ENCODE measurements at regions of chr2 and their contacts with region 1.

Region 1: GRCh38 chr2:73071360-73072133 is at the start of gene SFXN5:
- DNase-seq: peak; percentile 85 to 98 (median 90)
- ATAC-seq: peak; percentile 93
- H3K4me3 ChIP-seq: peak within 1 kb of the TSS; percentile 98
- H3K4me3 Mint-ChIP-seq: peak within 1 kb of the TSS; percentile 82 to 98 (median 93)
- H3K27ac ChIP-seq: peak within 1 kb of the TSS; percentile 81
- H3K27ac Mint-ChIP-seq: peak within 1 kb of the TSS; percentile 86 to 96 (median 94)
- H3K4me1 ChIP-seq: peaks cover 5 to 7% of the 10 kb centered on the region in 2 donors
- H3K4me1 Mint-ChIP-seq: peaks cover 14 to 39% (median 26%) of the 10 kb centered on the region in 7 donors
- H3K27me3 ChIP-seq: no peaks in the 10 kb centered on the region
- H3K27me3 Mint-ChIP-seq: peaks cover 0 to 18% (median 0%) of the 10 kb centered on the region in 5 donors
- total RNA-seq, gene SFXN5: 8.8 to 17.4 (median 10.9) TPM

Region 2: GRCh38 chr2:72825241-72826155 is 246.0 kb before region 1 on chr2 and contains the start of gene EXOC6B:
- CTCF ChIA-PET with region 1: no interaction called
- POLR2A ChIA-PET with region 1: no interaction called
- intact Hi-C with region 1: loop called (anchors 2 to 5 kb)
- DNase-seq: peak; percentile 78 to 87 (median 84)
- ATAC-seq: peak; percentile 96
- H3K4me3 ChIP-seq: peak within 1 kb of the TSS; percentile 70
- H3K4me3 Mint-ChIP-seq: peak within 1 kb of the TSS; percentile 88 to 99 (median 98)
- H3K27ac ChIP-seq: peak within 1 kb of the TSS; percentile 69
- H3K27ac Mint-ChIP-seq: peak within 1 kb of the TSS; percentile 70 to 96 (median 92)
- H3K4me1 ChIP-seq: peaks cover 14 to 19% of the 10 kb centered on the region in 2 donors
- H3K4me1 Mint-ChIP-seq: peaks cover 24 to 48% (median 45%) of the 10 kb centered on the region in 7 donors
- H3K27me3 ChIP-seq: no peaks in the 10 kb centered on the region
- H3K27me3 Mint-ChIP-seq: peaks cover 0 to 12% (median 5%) of the 10 kb centered on the region in 5 donors
- total RNA-seq, gene EXOC6B: 14.3 to 21.9 (median 18.0) TPM

Region 3: GRCh38 chr2:72993147-72993932 is 78.2 kb before region 1 on chr2:
- CTCF ChIA-PET with region 1: interaction called, 3 read pairs
- POLR2A ChIA-PET with region 1: no interaction called
- intact Hi-C with region 1: loop called in 1 of 2 experiments (anchors 1 kb)
- DNase-seq: peak; percentile 14 to 68 (median 42)
- ATAC-seq: peak; percentile 71
- H3K4me3 ChIP-seq: no peak overlapping the region
- H3K4me3 Mint-ChIP-seq: no peak overlapping the region
- H3K27ac ChIP-seq: no peak overlapping the region
- H3K27ac Mint-ChIP-seq: no peak overlapping the region
- H3K4me1 ChIP-seq: no peaks in the 10 kb centered on the region
- H3K4me1 Mint-ChIP-seq: peaks cover 0 to 9% (median 0%) of the 10 kb centered on the region in 7 donors
- H3K27me3 ChIP-seq: no peaks in the 10 kb centered on the region
- H3K27me3 Mint-ChIP-seq: no peaks in the 10 kb centered on the region

Region 4: DNA sequence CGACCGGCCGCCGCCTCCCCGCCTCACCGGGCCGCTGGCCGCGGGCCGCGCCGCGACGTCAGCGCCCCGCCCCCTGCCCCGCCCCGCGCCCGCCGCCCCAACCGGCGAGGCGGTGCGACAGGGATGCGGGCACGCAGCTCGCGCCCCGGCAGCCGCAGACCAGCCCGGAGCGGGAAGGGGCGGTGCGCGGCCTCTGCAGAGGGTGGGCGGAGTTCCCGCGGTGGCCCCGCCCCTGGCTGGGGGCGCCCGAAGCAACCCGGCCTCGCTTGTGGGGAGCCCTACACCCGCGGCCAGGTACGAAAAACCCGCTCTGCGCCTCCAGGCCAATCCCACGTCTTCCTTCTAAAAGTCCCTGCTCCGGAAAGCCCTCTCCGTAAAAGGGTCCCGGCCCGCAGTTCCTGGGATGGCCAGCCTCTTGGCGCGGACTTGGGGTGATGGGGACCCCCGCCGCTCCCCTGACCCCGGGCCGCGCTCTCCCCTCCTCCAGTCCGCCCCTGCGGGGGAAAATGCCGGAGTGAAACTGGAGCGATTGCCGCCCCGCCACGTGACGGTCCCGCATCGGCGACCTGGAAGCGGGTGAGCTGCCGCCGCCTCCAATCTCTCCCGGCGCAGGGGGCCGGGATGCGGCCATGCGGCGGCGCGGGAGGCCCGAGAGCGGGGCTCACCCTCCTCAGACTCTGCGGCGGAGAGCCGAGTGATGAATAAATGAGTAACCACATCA is 41.5 kb after region 1 on chr2 and contains the start of gene RAB11FIP5:
- CTCF ChIA-PET with region 1: no interaction called
- POLR2A ChIA-PET with region 1: interaction called, 5 read pairs
- intact Hi-C with region 1: loop called (anchors 1 kb)
- DNase-seq: peak; percentile 70 to 88 (median 76)
- ATAC-seq: peak; percentile 94
- H3K4me3 ChIP-seq: peak within 1 kb of the TSS; percentile 68
- H3K4me3 Mint-ChIP-seq: peak within 1 kb of the TSS; percentile 80 to 92 (median 88)
- H3K27ac ChIP-seq: peak within 1 kb of the TSS; percentile 61
- H3K27ac Mint-ChIP-seq: peak within 1 kb of the TSS in 8 of 9 donors; percentile 41 to 81 (median 74)
- H3K4me1 ChIP-seq: peaks cover 4 to 13% of the 10 kb centered on the region in 2 donors
- H3K4me1 Mint-ChIP-seq: peaks cover 9 to 33% (median 28%) of the 10 kb centered on the region in 7 donors
- H3K27me3 ChIP-seq: no peaks in the 10 kb centered on the region
- H3K27me3 Mint-ChIP-seq: peaks cover 0 to 14% (median 0%) of the 10 kb centered on the region in 5 donors
- total RNA-seq, gene RAB11FIP5: 8.6 to 13.2 (median 11.2) TPM

Region 5: DNA sequence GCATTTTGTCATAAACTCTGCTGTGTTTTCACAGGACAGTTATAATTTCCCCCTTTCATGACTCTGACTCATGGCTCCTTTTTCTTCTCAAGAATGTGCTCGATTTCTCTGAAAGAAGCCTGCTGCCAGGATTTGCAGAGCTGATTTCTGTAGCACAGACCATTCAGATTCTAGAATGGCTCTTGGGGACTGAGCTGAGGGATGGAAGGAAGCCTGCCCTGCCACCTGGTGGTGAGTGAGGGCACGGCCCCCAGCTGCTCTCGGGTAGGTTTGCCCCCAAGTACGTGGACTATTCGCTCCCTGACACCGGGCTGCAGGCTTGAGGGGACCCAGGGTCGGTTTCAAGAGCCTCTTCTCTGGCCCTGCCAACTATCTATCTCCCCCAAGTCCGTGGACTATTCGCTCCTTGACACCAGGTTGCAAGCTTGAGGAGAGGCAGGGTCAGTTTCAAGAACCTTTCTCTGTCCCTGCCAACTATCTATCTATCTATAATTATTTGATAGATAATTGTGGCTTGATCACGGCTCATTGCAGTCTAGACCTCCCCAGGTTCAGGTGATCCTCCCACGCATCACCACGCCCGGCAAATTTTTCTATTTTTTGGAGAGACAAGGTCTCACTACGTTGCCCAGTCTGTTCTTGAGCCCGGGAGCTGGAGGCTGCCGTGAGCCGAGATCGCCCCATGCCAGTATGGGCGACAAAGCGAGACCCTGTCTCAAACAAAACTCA is 141.1 kb after region 1 on chr2:
- CTCF ChIA-PET with region 1: no interaction called
- POLR2A ChIA-PET with region 1: interaction called, 5 read pairs
- intact Hi-C with region 1: loop called (anchors 1 kb)
- DNase-seq: peak; percentile 48 to 71 (median 64)
- ATAC-seq: peak; percentile 76
- H3K4me3 ChIP-seq: no peak overlapping the region
- H3K4me3 Mint-ChIP-seq: peak overlapping the region in 8 of 10 donors; percentile 15 to 97 (median 62)
- H3K27ac ChIP-seq: no peak overlapping the region
- H3K27ac Mint-ChIP-seq: peak overlapping the region in 6 of 9 donors; percentile 40 to 98 (median 91)
- H3K4me1 ChIP-seq: peaks cover 14 to 18% of the 10 kb centered on the region in 2 donors
- H3K4me1 Mint-ChIP-seq: peaks cover 16 to 44% (median 36%) of the 10 kb centered on the region in 7 donors
- H3K27me3 ChIP-seq: no peaks in the 10 kb centered on the region
- H3K27me3 Mint-ChIP-seq: peaks cover 4 to 8% (median 7%) of the 10 kb centered on the region in 5 donors

Region 6: DNA sequence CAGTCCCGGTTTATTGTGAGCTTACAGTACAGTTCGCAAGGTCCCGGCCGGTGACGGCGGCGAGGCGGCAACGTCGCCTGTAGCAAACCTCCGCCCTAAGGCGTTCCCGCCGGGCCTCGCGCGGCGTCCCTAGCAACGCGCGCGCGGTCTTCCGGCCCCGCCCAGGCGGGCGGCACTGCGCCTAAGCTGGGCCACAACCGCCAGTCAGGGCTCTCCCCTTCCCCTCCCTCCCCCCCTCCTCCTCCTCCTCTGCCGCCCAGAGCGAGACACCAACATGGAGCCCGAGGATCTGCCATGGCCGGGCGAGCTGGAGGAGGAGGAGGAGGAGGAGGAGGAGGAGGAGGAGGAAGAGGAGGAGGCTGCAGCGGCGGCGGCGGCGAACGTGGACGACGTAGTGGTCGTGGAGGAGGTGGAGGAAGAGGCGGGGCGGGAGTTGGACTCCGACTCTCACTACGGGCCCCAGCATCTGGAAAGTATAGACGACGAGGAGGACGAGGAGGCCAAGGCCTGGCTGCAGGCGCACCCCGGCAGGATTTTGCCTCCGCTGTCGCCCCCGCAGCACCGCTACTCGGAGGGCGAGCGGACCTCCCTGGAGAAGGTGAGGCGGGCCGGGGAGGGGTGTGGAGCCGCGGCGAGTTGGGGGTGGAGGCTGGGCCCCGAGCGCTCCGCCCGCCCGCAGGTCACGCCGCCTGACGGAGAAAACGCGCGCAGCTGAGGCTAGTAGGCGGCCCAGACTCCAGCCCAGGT is 314.2 kb after region 1 on chr2 and contains the start of gene ALMS1:
- CTCF ChIA-PET with region 1: no interaction called
- POLR2A ChIA-PET with region 1: no interaction called
- intact Hi-C with region 1: loop called (anchors 1 kb)
- DNase-seq: peak; percentile 80 to 91 (median 87)
- ATAC-seq: peak; percentile 94
- H3K4me3 ChIP-seq: peak within 1 kb of the TSS; percentile 85
- H3K4me3 Mint-ChIP-seq: peak within 1 kb of the TSS; percentile 81 to 96 (median 90)
- H3K27ac ChIP-seq: peak within 1 kb of the TSS; percentile 92
- H3K27ac Mint-ChIP-seq: peak within 1 kb of the TSS; percentile 93 to 98 (median 96)
- H3K4me1 ChIP-seq: peaks cover 4 to 18% of the 10 kb centered on the region in 2 donors
- H3K4me1 Mint-ChIP-seq: peaks cover 23 to 47% (median 44%) of the 10 kb centered on the region in 7 donors
- H3K27me3 ChIP-seq: no peaks in the 10 kb centered on the region
- H3K27me3 Mint-ChIP-seq: peaks cover 0 to 23% (median 0%) of the 10 kb centered on the region in 5 donors
- total RNA-seq, gene ALMS1: 16.3 to 46.7 (median 23.5) TPM

Region 7: DNA sequence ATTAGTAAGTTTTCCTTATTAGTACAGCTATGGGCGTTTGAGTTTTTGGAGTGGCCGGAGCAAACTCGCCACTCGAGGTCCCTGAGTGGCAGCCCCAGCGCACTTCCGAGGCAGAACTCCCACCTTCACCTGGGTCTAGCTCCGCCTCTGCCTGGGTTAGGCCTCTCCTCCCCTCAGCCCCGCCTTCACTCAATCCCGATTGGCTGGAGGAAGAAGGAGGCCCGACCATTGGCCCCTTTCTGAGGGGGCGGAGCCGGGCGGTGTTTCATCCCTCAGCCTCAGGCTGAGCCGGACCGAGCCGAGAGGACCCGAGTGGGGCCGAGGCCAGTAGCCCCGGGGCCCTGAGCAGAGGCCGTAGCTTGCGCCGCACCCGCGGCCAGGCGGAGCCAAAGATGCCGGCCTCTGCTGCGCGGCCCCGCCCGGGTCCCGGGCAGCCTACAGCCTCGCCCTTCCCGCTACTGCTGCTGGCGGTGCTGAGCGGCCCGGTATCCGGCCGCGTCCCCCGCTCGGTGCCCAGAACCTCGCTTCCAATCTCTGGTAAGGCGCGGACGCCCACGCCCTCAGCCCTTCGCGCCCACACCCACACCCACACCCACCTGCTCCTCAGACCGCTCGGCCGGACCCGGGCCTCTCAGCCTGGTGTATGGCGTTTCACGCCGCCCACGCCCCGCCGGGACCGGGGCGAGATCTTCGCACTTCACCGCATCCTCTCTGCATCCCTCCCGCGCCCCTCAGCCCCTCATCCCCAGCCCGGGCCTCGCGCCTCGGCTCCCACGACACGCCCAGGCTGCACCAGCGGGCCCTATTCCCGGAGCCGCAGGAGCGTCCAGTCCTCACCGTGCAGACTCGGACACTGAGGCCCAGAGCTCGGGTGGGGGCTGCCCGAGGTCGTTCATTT is 1582.7 kb after region 1 on chr2 and contains the start of gene SEMA4F:
- CTCF ChIA-PET with region 1: no interaction called
- POLR2A ChIA-PET with region 1: no interaction called
- intact Hi-C with region 1: loop called in 1 of 2 experiments (anchors 5 kb)
- DNase-seq: peak; percentile 85 to 95 (median 92)
- ATAC-seq: peak; percentile 100
- H3K4me3 ChIP-seq: peak within 1 kb of the TSS; percentile 86
- H3K4me3 Mint-ChIP-seq: peak within 1 kb of the TSS; percentile 82 to 97 (median 90)
- H3K27ac ChIP-seq: peak within 1 kb of the TSS; percentile 75
- H3K27ac Mint-ChIP-seq: peak within 1 kb of the TSS in 8 of 9 donors; percentile 59 to 96 (median 85)
- H3K4me1 ChIP-seq: peaks cover 6 to 8% of the 10 kb centered on the region in 2 donors
- H3K4me1 Mint-ChIP-seq: peaks cover 12 to 34% (median 23%) of the 10 kb centered on the region in 7 donors
- H3K27me3 ChIP-seq: no peaks in the 10 kb centered on the region
- H3K27me3 Mint-ChIP-seq: peaks cover 3 to 21% (median 5%) of the 10 kb centered on the region in 5 donors
- total RNA-seq, gene SEMA4F: 5.7 to 23.6 (median 11.0) TPM

Measured in naive thymus-derived CD4-positive, alpha-beta T cell (primary cell).